Gastrocnemius medialis (tissue), 4 donors: ENCODE measurements at regions of chr2 and their contacts with region 1.

Region 1: GRCh38 chr2:234500394-234501006 is 3.6 kb upstream of the ARL4C start:
- DNase-seq: no peak
- ATAC-seq: no peak
- H3K4me3 ChIP-seq: no peak overlapping the region
- H3K27ac ChIP-seq: no peak overlapping the region
- H3K4me1 ChIP-seq: peaks cover 9% of the 10 kb centered on the region in 2 donors
- H3K27me3 ChIP-seq: peaks cover 0 to 5% (median 4%) of the 10 kb centered on the region in 3 donors
- CTCF ChIP-seq: peak in 2 of 5 experiments; percentile 20 to 40
- POLR2A ChIP-seq: no peak

Region 2: DNA sequence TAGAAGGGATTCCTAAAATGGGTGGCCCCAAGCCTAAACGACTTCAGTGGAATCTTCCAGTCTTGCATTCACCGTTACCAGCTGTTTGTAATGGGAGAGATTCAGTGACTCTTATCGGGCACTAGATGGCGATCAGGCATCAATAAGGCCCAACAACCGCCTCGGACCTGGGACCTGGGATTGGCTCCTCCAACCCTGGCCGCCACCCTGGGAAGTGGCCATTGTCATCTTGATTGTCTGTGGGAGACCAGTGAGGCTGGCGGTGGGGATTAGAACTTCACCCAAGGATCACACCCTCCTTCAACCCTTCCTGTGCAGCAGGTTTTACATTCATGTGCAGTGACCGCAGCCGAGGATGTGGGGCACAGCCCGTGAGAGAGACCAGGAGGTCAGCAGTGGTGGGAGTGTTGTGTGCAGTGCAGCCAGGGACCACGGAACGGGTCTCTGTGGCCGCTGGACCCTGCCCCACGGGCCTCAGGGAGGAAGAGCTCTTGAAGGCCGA is 364.7 kb before region 1 on chr2:
- in situ Hi-C with region 1: loop called in 2 of 4 experiments (anchors 10 to 25 kb)
- intact Hi-C with region 1: loop called (anchors 5 kb)
- DNase-seq: no peak
- ATAC-seq: no peak
- H3K4me3 ChIP-seq: no peak overlapping the region
- H3K27ac ChIP-seq: no peak overlapping the region
- H3K4me1 ChIP-seq: no peaks in the 10 kb centered on the region
- H3K27me3 ChIP-seq: no peaks in the 10 kb centered on the region
- CTCF ChIP-seq: peak in 3 of 5 experiments; percentile 5 to 46 (median 37)
- POLR2A ChIP-seq: no peak

Region 3: DNA sequence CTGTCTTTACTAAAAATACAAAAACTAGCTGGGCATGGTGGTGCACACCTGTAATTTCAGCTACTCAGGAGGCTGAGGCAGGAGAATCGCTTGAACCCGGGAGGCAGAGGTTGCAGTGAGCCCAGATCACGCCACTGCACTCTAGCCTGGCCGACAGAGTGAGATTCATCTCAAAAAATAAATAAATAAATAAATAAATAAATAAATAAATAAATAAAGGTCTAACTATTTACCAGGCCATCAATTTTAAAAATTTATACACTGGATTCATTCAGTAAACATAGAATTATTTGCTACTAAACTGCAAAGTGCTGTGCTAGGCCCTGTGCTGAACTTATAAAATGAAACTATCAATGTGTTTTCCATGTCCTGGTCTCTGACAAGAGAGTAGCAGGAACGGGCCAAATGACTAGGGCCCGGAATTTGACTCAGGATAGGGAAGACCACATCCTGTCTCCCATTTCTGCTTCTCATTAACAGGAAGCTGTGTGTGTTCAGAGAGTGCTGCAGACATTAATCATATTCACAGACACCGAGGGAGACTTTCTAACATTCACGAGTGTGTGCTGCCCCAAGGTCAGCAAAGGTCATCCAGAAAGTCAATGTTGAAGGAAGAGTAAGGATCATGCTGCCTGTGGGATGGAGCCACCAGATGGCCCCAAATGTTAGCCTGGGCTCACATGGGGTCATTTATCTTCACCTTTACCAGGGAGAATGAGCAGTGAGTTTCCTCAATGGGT is 354.2 kb before region 1 on chr2:
- in situ Hi-C with region 1: loop called in 2 of 4 experiments (anchors 10 to 25 kb)
- intact Hi-C with region 1: no loop called
- DNase-seq: no peak
- ATAC-seq: no peak
- H3K4me3 ChIP-seq: no peak overlapping the region
- H3K27ac ChIP-seq: no peak overlapping the region
- H3K4me1 ChIP-seq: no peaks in the 10 kb centered on the region
- H3K27me3 ChIP-seq: no peaks in the 10 kb centered on the region
- CTCF ChIP-seq: no peak
- POLR2A ChIP-seq: no peak

Region 4: GRCh38 chr2:234288974-234289455 is 211.5 kb before region 1 on chr2:
- in situ Hi-C with region 1: loop called in 1 of 4 experiments (anchors 10 kb)
- intact Hi-C with region 1: no loop called
- DNase-seq: peak; percentile 14 to 33
- ATAC-seq: peak; percentile 21 to 46
- H3K4me3 ChIP-seq: no peak overlapping the region
- H3K27ac ChIP-seq: no peak overlapping the region
- H3K4me1 ChIP-seq: no peaks in the 10 kb centered on the region
- H3K27me3 ChIP-seq: no peaks in the 10 kb centered on the region
- CTCF ChIP-seq: peak; percentile 14 to 71 (median 48)
- POLR2A ChIP-seq: no peak

Region 5: GRCh38 chr2:234751275-234751973 is 250.9 kb after region 1 on chr2:
- in situ Hi-C with region 1: no loop called
- intact Hi-C with region 1: no loop called
- DNase-seq: no peak
- ATAC-seq: no peak
- H3K4me3 ChIP-seq: no peak overlapping the region
- H3K27ac ChIP-seq: no peak overlapping the region
- H3K4me1 ChIP-seq: no peaks in the 10 kb centered on the region
- H3K27me3 ChIP-seq: no peaks in the 10 kb centered on the region
- CTCF ChIP-seq: no peak
- POLR2A ChIP-seq: no peak